Caco-2 (cell line): ENCODE measurements at regions of chr14 and their contacts with region 1.

Region 1: GRCh38 chr14:20970983-20971704 is 15.9 kb downstream of the RNASE2 start:
- DNase-seq: peak; percentile 84 to 92
- H3K4me3 ChIP-seq: peak overlapping the region; percentile 71
- H3K4me3 Mint-ChIP-seq: peak overlapping the region; percentile 88
- H3K27ac Mint-ChIP-seq: peak overlapping the region; percentile 66
- H3K4me1 ChIP-seq: peaks cover 29% of the 10 kb centered on the region
- H3K4me1 Mint-ChIP-seq: peaks cover 23% of the 10 kb centered on the region
- H3K27me3 ChIP-seq: no peaks in the 10 kb centered on the region
- H3K27me3 Mint-ChIP-seq: peaks cover 11% of the 10 kb centered on the region
- CTCF ChIP-seq: peak; percentile 75 to 99

Region 2: DNA sequence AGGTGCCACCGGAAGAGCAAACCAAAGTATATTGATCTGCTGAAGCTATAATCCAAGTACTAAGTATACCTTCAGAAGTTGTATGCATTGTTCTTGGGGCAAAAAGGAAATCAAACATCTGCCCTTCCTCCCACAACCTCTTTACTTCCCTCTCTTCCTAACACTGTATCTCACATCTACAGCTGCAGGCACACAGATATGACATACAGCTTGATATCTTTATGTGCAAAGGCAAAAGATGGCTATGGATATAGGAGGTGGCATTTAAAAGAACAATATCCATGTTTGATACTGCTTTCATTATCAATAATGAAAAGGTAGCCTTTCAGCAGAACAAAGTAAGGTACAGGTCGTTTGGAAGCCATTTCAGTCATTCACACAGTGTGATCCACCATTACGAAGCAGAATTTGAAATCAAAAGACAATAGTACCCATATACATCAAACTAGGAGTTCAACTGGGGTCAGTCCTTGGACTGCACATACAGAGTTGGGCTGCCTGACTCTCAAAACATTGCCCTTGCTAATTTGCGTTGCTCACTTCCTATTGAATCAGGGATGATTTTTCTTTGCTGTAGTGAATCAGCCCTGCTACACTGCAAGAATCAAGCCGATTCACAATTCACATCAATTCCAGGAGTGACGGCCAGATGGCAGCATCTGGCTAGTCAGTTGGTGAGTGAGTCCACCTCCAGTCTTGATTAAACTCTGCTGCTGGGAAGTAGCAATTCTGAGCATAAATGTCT is 273.7 kb before region 1 on chr14:
- CTCF ChIA-PET with region 1: interaction called, 3 read pairs
- POLR2A ChIA-PET with region 1: no interaction called
- intact Hi-C with region 1: loop called (anchors 1 kb)
- DNase-seq: peak; percentile 61 to 77
- H3K4me3 ChIP-seq: no peak overlapping the region
- H3K4me3 Mint-ChIP-seq: no peak overlapping the region
- H3K27ac Mint-ChIP-seq: no peak overlapping the region
- H3K4me1 ChIP-seq: no peaks in the 10 kb centered on the region
- H3K4me1 Mint-ChIP-seq: peaks cover 7% of the 10 kb centered on the region
- H3K27me3 ChIP-seq: no peaks in the 10 kb centered on the region
- H3K27me3 Mint-ChIP-seq: no peaks in the 10 kb centered on the region
- CTCF ChIP-seq: peak; percentile 69 to 77

Region 3: DNA sequence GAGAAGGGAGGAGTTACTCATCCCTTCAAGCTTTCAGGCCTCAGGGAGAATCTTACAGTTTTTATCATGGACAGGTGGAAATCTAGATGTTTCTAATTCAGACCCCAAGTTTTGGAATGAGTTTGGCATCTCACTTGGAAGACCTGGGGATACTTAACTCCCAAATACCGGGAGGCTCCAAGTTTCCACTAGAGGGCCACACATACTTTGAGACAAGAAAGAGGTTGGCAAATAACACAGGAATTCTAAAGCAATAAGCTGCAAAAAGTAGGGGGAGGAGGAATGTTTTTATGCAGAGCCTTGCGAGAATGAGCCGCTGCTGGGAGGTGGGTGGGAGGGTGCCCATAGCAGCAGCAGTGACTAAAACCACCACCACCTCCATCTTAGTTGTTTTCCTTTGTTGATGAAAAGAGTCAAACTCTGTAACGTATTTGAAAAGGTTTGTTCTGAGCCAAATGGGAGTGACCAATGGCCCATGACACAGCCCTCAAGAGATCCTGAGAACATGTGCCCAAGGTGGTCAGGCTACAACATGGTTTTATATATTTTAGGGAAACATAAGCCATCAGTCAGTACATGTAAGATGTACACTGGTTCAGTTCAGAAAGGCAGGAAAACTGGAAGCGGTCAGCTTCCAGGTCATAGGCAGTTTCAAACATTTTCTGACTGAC is 134.3 kb before region 1 on chr14:
- CTCF ChIA-PET with region 1: interaction called, 11 read pairs
- POLR2A ChIA-PET with region 1: no interaction called
- intact Hi-C with region 1: no loop called
- DNase-seq: peak; percentile 48 to 56
- H3K4me3 ChIP-seq: no peak overlapping the region
- H3K4me3 Mint-ChIP-seq: no peak overlapping the region
- H3K27ac Mint-ChIP-seq: no peak overlapping the region
- H3K4me1 ChIP-seq: peaks cover 9% of the 10 kb centered on the region
- H3K4me1 Mint-ChIP-seq: peaks cover 6% of the 10 kb centered on the region
- H3K27me3 ChIP-seq: no peaks in the 10 kb centered on the region
- H3K27me3 Mint-ChIP-seq: no peaks in the 10 kb centered on the region
- CTCF ChIP-seq: peak; percentile 38 to 74

Region 4: GRCh38 chr14:20873370-20874177 is 97.6 kb before region 1 on chr14:
- CTCF ChIA-PET with region 1: no interaction called
- POLR2A ChIA-PET with region 1: no interaction called
- intact Hi-C with region 1: loop called (anchors 5 kb)
- DNase-seq: peak; percentile 55 to 73
- H3K4me3 ChIP-seq: no peak overlapping the region
- H3K4me3 Mint-ChIP-seq: no peak overlapping the region
- H3K27ac Mint-ChIP-seq: no peak overlapping the region
- H3K4me1 ChIP-seq: no peaks in the 10 kb centered on the region
- H3K4me1 Mint-ChIP-seq: no peaks in the 10 kb centered on the region
- H3K27me3 ChIP-seq: no peaks in the 10 kb centered on the region; the same call in 1 of the 2 replicates
- H3K27me3 Mint-ChIP-seq: peaks cover 14% of the 10 kb centered on the region
- CTCF ChIP-seq: peak; percentile 71 to 77

Region 5: GRCh38 chr14:20989572-20990551 is 18.7 kb after region 1 on chr14 and contains the start of gene METTL17:
- CTCF ChIA-PET with region 1: interaction called, 4 read pairs
- POLR2A ChIA-PET with region 1: interaction called, 4 read pairs
- intact Hi-C with region 1: loop called (anchors 1 kb)
- DNase-seq: peak; percentile 91 to 95
- H3K4me3 ChIP-seq: peak within 1 kb of the TSS; percentile 65
- H3K4me3 Mint-ChIP-seq: peak within 1 kb of the TSS; percentile 71
- H3K27ac Mint-ChIP-seq: peak within 1 kb of the TSS; percentile 33
- H3K4me1 ChIP-seq: peaks cover 19% of the 10 kb centered on the region
- H3K4me1 Mint-ChIP-seq: peaks cover 6% of the 10 kb centered on the region
- H3K27me3 ChIP-seq: no peaks in the 10 kb centered on the region
- H3K27me3 Mint-ChIP-seq: no peaks in the 10 kb centered on the region
- CTCF ChIP-seq: peak in 1 of 2 experiments; percentile 52
- total RNA-seq, gene METTL17: 78.8 and 80.5 TPM in 2 replicates

Region 6: DNA sequence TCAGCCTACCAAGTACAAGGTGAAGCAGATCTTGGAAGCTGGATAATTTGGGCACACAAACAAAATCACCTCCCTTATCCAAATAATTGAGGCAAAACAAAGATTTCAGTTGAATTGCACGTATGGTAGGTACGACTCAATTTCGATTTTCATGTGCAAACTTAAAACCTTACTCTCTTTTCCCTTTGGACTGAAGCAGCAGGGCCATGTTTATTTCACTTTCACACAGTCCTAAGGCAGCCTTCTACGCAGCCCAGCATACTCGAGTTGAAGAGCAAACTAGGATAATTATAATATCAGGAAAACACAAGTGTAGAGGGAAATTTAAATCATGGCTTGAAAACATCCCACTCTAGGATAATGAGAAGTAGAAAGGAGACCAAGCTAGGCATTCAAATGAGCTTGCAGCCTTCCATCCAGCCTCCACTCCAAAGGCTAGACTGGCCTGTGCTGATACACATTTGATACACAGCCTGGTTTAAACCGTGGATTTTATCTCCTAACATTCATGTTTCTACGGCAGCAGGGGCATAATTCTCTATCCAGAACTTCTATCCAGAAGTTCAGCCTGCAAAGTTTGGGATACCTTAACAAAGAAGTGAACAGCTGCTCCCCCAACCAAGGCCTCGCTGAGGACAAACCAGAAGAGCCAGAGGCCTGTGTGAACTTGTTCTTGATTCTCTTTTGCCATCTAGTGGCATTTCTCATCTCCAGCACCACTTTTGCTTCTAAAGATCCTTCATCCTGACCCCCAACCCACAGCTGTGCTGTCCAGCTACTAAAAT is 68.6 kb after region 1 on chr14:
- CTCF ChIA-PET with region 1: interaction called, 13 read pairs
- POLR2A ChIA-PET with region 1: no interaction called
- intact Hi-C with region 1: no loop called
- DNase-seq: peak; percentile 54 to 68
- H3K4me3 ChIP-seq: no peak overlapping the region
- H3K4me3 Mint-ChIP-seq: no peak overlapping the region
- H3K27ac Mint-ChIP-seq: no peak overlapping the region
- H3K4me1 ChIP-seq: peaks cover 24% of the 10 kb centered on the region
- H3K4me1 Mint-ChIP-seq: peaks cover 21% of the 10 kb centered on the region
- H3K27me3 ChIP-seq: no peaks in the 10 kb centered on the region
- H3K27me3 Mint-ChIP-seq: peaks cover 10% of the 10 kb centered on the region
- CTCF ChIP-seq: peak; percentile 60 to 72